ENCODE measurements at regions of chr10 and their contacts with region 1.

Region 1: GRCh38 chr10:118568327-118568848 is 27.1 kb downstream of the PRLHR start:
- DNase-seq: peak; percentile 35
- H3K4me3 ChIP-seq: no peak overlapping the region
- H3K27ac ChIP-seq: peak overlapping the region in 1 of 4 donors; percentile 14
- H3K4me1 ChIP-seq: peaks cover 0 to 21% (median 5%) of the 10 kb centered on the region in 4 donors
- H3K27me3 ChIP-seq: no peaks in the 10 kb centered on the region
- CTCF ChIP-seq: peak; percentile 78 to 97 (median 87)
- EP300 ChIP-seq: no peak
- POLR2A ChIP-seq: no peak

Region 2: DNA sequence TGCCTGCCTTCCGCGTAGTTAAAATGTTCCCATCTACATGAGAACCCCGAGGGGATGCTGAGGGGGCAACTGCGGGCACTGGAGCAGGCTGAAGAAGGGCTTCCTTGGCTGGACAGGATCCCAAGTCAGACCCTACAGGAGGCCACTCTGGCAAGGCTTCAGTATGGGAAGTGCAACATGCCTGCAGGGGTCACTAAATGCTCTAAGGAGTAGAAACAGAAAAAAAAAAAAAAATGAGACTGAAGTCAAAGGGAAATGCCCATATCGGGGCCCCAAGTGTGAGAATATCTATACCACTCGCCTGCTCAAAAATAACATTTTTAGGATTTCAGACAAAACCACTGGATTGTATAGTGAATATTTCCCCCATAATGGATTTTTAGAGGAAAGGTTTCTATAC is 259.7 kb before region 1 on chr10:
- in situ Hi-C with region 1: no loop called
- intact Hi-C with region 1: no loop called
- DNase-seq: no peak
- H3K4me3 ChIP-seq: no peak overlapping the region
- H3K27ac ChIP-seq: peak overlapping the region in 2 of 4 donors; percentile 39 to 40
- H3K4me1 ChIP-seq: peaks cover 3 to 7% (median 3%) of the 10 kb centered on the region in 4 donors
- H3K27me3 ChIP-seq: no peaks in the 10 kb centered on the region
- CTCF ChIP-seq: no peak
- EP300 ChIP-seq: no peak
- POLR2A ChIP-seq: no peak

Region 3: DNA sequence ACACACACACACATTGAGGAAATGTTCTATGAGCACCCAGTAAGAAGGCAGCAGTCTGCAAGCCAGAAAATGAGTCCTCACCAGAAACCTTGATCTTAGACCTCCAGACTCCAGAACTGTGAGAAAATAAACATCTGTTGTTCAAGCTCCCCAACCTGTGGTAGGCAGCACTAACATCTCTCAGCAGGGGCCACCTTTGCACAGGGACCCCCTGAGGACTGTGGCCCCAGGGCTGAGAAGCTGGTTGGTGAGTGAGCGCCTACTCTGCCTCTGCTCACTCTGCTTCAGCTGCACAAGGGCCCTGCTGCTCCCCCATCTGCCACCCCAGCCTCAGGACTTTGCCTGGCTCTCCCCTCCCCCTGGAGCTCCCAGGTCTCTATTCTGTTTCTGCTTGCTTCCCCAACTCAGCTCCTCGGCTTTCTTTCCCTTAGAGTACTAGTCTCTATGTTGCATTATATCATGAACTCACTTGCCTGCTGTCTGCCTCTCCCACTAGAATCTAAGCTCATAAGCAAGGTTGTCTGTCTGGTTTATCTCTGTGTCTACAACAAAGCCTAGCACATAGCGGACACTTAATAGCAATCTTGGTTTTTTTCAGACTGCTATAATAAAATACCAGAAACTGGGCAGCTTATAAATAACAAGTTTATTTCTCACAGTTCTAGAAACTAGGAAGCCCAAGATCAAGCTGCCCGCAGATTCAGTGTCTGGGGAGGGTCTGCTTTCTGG is 67.5 kb after region 1 on chr10:
- in situ Hi-C with region 1: no loop called
- intact Hi-C with region 1: loop called (anchors 5 kb)
- DNase-seq: no peak
- H3K4me3 ChIP-seq: no peak overlapping the region
- H3K27ac ChIP-seq: peak overlapping the region in 2 of 4 donors; percentile 3 to 36
- H3K4me1 ChIP-seq: no peaks in the 10 kb centered on the region
- H3K27me3 ChIP-seq: no peaks in the 10 kb centered on the region
- CTCF ChIP-seq: no peak
- EP300 ChIP-seq: no peak
- POLR2A ChIP-seq: no peak

Region 4: DNA sequence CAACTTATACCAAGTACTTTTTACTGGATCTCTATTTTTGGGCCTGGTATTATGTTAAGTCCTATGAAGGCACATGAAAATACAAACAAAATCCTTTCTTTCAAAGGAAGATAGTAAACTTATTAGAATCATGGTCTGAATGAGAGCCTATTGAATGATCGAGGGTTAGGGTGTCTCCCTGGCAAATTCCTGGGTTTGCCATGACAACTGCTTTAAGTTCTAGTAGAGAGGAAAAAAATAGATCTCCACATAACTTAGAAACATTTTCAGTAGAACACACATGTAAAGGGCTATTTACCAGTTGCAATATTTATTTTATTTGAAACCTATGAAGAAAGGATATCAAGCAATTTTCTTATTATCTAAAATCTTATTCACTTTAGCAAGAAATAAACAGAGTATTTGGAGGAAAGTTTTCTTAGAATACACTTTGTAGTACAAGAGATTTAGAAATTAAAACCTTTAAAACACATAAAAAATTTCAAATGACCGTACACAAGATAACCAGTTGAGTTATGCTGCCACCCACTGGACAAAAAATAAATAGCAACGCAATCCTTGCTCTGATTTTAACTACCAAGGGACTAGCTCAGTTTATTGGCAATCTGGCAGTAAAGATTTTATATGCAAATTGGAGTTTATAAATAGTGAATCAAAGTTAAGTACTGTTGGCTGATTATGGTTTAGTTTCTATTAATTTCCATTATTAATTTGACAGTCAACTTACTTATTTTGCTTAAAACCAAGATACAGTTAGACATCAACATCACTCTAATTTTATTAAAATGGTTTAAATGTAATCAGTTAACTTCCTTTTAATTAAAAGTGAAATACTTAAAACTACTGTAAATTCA is 152.5 kb after region 1 on chr10:
- in situ Hi-C with region 1: loop called (anchors 5 to 10 kb)
- intact Hi-C with region 1: loop called (anchors 5 kb)
- DNase-seq: peak; percentile 58
- H3K4me3 ChIP-seq: no peak overlapping the region
- H3K27ac ChIP-seq: no peak overlapping the region
- H3K4me1 ChIP-seq: peaks cover 0 to 11% (median 3%) of the 10 kb centered on the region in 4 donors
- H3K27me3 ChIP-seq: no peaks in the 10 kb centered on the region
- CTCF ChIP-seq: peak; percentile 79 to 91 (median 82)
- EP300 ChIP-seq: no peak
- POLR2A ChIP-seq: no peak

Region 5: GRCh38 chr10:118800920-118801319 is 232.5 kb after region 1 on chr10:
- in situ Hi-C with region 1: loop called (anchors 10 to 25 kb)
- intact Hi-C with region 1: no loop called
- DNase-seq: peak; percentile 35
- H3K4me3 ChIP-seq: no peak overlapping the region
- H3K27ac ChIP-seq: no peak overlapping the region
- H3K4me1 ChIP-seq: peaks cover 0 to 3% (median 1%) of the 10 kb centered on the region in 4 donors
- H3K27me3 ChIP-seq: no peaks in the 10 kb centered on the region
- CTCF ChIP-seq: peak; percentile 23 to 56 (median 42)
- EP300 ChIP-seq: no peak
- POLR2A ChIP-seq: no peak

Region 6: GRCh38 chr10:118892255-118892654 is 323.9 kb after region 1 on chr10:
- in situ Hi-C with region 1: loop called in 1 of 4 experiments (anchors 25 kb)
- intact Hi-C with region 1: no loop called
- DNase-seq: no peak
- H3K4me3 ChIP-seq: no peak overlapping the region
- H3K27ac ChIP-seq: no peak overlapping the region
- H3K4me1 ChIP-seq: no peaks in the 10 kb centered on the region
- H3K27me3 ChIP-seq: no peaks in the 10 kb centered on the region
- CTCF ChIP-seq: no peak
- EP300 ChIP-seq: no peak
- POLR2A ChIP-seq: no peak

Region 7: GRCh38 chr10:119028900-119029612 is 460.7 kb after region 1 on chr10:
- in situ Hi-C with region 1: no loop called
- intact Hi-C with region 1: loop called (anchors 10 kb)
- DNase-seq: peak; percentile 89
- H3K4me3 ChIP-seq: peak overlapping the region; percentile 19 to 74 (median 62)
- H3K27ac ChIP-seq: peak overlapping the region; percentile 70 to 84 (median 76)
- H3K4me1 ChIP-seq: peaks cover 5 to 30% (median 21%) of the 10 kb centered on the region in 4 donors
- H3K27me3 ChIP-seq: no peaks in the 10 kb centered on the region
- CTCF ChIP-seq: peak in 1 of 5 experiments; percentile 24
- EP300 ChIP-seq: no peak
- POLR2A ChIP-seq: no peak

Measured in transverse colon (tissue), 4 donors.